Caco-2 (cell line): ENCODE measurements at regions of chr15 and their contacts with region 1.

Region 1: DNA sequence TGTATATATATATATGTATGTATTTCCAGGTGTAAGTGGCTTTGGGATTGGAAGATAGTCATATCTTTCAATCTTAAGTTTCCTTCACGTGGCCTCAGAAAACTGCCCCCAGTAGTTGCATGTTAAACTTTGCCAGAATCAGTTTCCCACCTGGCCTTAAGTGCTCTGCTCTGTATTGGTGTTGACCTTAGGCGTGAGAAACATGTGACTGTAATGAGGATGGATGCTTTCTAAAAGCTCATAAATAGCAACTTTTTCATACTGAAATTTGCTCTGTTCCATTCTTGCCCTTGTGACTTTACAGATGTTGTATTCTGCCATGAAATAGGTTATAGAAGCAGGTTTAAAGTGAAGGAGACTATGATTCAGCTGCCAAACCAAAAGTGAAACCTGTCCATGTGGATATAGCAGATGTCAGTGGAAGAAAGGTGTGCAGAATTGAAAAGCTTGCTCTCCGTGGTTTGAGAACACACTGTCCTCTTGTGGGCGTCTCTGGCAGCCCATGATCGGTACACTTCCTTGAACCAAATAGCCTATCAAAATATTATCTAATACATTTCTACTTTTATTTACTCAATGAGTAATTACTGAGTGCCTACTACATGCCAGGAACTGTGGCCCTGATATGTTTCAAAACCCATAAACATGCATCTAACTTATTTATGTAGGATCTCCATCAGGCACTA is 15.8 kb downstream of the SCG5 start:
- DNase-seq: no peak
- H3K4me3 ChIP-seq: no peak overlapping the region
- H3K4me3 Mint-ChIP-seq: no peak overlapping the region
- H3K27ac Mint-ChIP-seq: no peak overlapping the region
- H3K4me1 ChIP-seq: no peaks in the 10 kb centered on the region
- H3K4me1 Mint-ChIP-seq: no peaks in the 10 kb centered on the region
- H3K27me3 ChIP-seq: no peaks in the 10 kb centered on the region
- H3K27me3 Mint-ChIP-seq: no peaks in the 10 kb centered on the region
- CTCF ChIP-seq: peak in 1 of 2 experiments; percentile 13

Region 2: DNA sequence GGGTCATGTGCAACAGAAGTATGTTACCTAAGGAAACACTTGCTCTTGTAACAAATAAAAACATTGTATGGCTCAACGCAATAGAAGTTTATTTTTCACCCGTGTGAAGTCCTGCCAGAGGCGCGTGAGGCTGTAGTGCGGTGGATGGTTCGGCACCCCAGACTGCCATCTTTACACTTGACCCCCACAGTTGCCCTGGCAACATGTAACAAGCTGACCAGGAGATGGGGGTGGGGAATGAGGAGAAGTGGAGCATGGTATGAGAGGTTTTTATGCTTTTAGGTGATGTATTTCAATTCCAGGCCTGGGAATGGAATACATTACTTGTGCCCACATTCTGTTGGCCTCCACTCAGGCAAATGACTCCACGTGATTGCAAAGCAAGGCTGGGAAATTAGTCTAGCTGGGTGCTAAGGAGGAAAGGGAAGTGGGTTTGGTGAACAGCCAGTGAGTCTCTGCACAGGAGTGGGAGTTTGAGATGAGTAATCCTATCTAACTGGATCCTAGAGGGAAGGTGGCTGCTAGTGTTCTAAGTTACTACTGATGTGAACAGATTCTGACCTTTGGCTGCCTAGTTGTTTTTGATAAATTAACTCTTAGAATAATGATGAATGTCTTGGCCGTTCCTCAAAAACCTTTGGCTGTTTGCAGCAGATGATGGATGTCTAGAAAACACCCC is 26.7 kb after region 1 on chr15:
- CTCF ChIA-PET with region 1: no interaction called
- POLR2A ChIA-PET with region 1: no interaction called
- intact Hi-C with region 1: no loop called
- DNase-seq: no peak
- H3K4me3 ChIP-seq: no peak overlapping the region
- H3K4me3 Mint-ChIP-seq: no peak overlapping the region
- H3K27ac Mint-ChIP-seq: no peak overlapping the region
- H3K4me1 ChIP-seq: no peaks in the 10 kb centered on the region
- H3K4me1 Mint-ChIP-seq: no peaks in the 10 kb centered on the region
- H3K27me3 ChIP-seq: no peaks in the 10 kb centered on the region
- H3K27me3 Mint-ChIP-seq: no peaks in the 10 kb centered on the region
- CTCF ChIP-seq: no peak

Region 3: DNA sequence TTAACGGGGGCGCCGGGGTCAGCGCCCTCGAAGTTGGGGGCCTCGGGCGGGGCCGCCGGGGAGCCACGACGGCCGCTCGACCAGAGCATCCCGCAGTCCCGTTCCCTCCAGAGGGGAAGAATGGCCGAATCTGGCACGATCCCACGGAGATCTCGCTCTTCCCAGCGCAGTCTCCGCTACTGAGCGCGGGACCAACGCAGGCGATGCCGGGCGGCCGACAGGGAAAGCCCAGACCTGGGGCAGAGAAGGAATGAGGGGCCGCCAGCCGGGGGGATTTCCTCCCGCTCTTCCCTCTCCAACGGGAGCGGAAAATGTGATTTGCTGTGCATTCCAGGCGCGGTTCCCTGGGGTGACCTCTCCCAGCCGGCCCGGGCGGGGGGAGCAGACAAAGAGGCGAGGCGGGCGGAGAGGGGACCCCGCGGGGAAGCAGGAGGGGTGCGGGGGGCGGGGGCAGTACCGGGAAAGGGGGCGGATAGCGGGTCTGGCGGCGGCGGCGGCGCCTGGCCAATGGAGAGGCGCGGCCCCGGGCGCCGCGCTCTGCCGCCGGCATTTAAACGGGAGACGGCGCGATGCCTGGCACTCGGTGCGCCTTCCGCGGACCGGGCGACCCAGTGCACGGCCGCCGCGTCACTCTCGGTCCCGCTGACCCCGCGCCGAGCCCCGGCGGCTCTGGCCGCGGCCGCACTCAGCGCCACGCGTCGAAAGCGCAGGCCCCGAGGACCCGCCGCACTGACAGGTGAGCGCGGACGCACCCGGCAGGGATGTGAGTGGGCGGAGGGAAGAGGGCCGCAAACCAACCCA is 60.3 kb after region 1 on chr15 and contains the start of gene GREM1:
- CTCF ChIA-PET with region 1: no interaction called
- POLR2A ChIA-PET with region 1: no interaction called
- intact Hi-C with region 1: loop called (anchors 5 kb)
- DNase-seq: no peak
- H3K4me3 ChIP-seq: peak within 1 kb of the TSS; percentile 34
- H3K4me3 Mint-ChIP-seq: peak within 1 kb of the TSS; percentile 67
- H3K27ac Mint-ChIP-seq: no peak within 1 kb of the TSS
- H3K4me1 ChIP-seq: peaks cover 6% of the 10 kb centered on the region; the same call in 1 of the 2 replicates
- H3K4me1 Mint-ChIP-seq: no peaks in the 10 kb centered on the region
- H3K27me3 ChIP-seq: peaks cover 5% of the 10 kb centered on the region
- H3K27me3 Mint-ChIP-seq: peaks cover 31% of the 10 kb centered on the region
- CTCF ChIP-seq: no peak
- total RNA-seq, gene GREM1: 0.54 and 0.93 TPM in 2 replicates

Region 4: GRCh38 chr15:32844118-32844711 is 186.9 kb after region 1 on chr15:
- CTCF ChIA-PET with region 1: no interaction called
- POLR2A ChIA-PET with region 1: no interaction called
- intact Hi-C with region 1: loop called (anchors 5 kb)
- DNase-seq: peak in 1 of 2 experiments; percentile 24
- H3K4me3 ChIP-seq: no peak overlapping the region
- H3K4me3 Mint-ChIP-seq: no peak overlapping the region
- H3K27ac Mint-ChIP-seq: no peak overlapping the region
- H3K4me1 ChIP-seq: no peaks in the 10 kb centered on the region
- H3K4me1 Mint-ChIP-seq: no peaks in the 10 kb centered on the region
- H3K27me3 ChIP-seq: no peaks in the 10 kb centered on the region
- H3K27me3 Mint-ChIP-seq: peaks cover 6% of the 10 kb centered on the region
- CTCF ChIP-seq: peak; percentile 62 to 81

Region 5: GRCh38 chr15:32956006-32956405 is 298.7 kb after region 1 on chr15:
- CTCF ChIA-PET with region 1: interaction called, 11 read pairs
- POLR2A ChIA-PET with region 1: no interaction called
- intact Hi-C with region 1: loop called (anchors 1 kb)
- DNase-seq: peak in 1 of 2 experiments; percentile 33
- H3K4me3 ChIP-seq: no peak overlapping the region
- H3K4me3 Mint-ChIP-seq: no peak overlapping the region
- H3K27ac Mint-ChIP-seq: no peak overlapping the region
- H3K4me1 ChIP-seq: no peaks in the 10 kb centered on the region
- H3K4me1 Mint-ChIP-seq: no peaks in the 10 kb centered on the region
- H3K27me3 ChIP-seq: no peaks in the 10 kb centered on the region
- H3K27me3 Mint-ChIP-seq: peaks cover 2% of the 10 kb centered on the region
- CTCF ChIP-seq: peak; percentile 22 to 58

Region 6: GRCh38 chr15:33132722-33133345 is 475.5 kb after region 1 on chr15:
- CTCF ChIA-PET with region 1: no interaction called
- POLR2A ChIA-PET with region 1: no interaction called
- intact Hi-C with region 1: loop called (anchors 5 kb)
- DNase-seq: peak; percentile 51 to 64
- H3K4me3 ChIP-seq: no peak overlapping the region
- H3K4me3 Mint-ChIP-seq: no peak overlapping the region
- H3K27ac Mint-ChIP-seq: no peak overlapping the region
- H3K4me1 ChIP-seq: no peaks in the 10 kb centered on the region
- H3K4me1 Mint-ChIP-seq: no peaks in the 10 kb centered on the region
- H3K27me3 ChIP-seq: no peaks in the 10 kb centered on the region
- H3K27me3 Mint-ChIP-seq: peaks cover 11% of the 10 kb centered on the region
- CTCF ChIP-seq: peak; percentile 70 to 78